ENCODE measurements at regions of chr10 and their contacts with region 1.

Region 1: GRCh38 chr10:95423164-95424005 is 132.6 kb upstream of the PDLIM1 start:
- DNase-seq: no peak
- H3K4me3 ChIP-seq: no peak overlapping the region
- H3K27ac ChIP-seq: no peak overlapping the region
- H3K4me1 ChIP-seq: peaks cover 0 to 3% of the 10 kb centered on the region in 2 donors
- H3K27me3 ChIP-seq: no peaks in the 10 kb centered on the region
- CTCF ChIP-seq: no peak
- POLR2A ChIP-seq: no peak

Region 2: GRCh38 chr10:95341716-95342130 is 81.7 kb before region 1 on chr10:
- intact Hi-C with region 1: no loop called
- DNase-seq: no peak
- H3K4me3 ChIP-seq: no peak overlapping the region
- H3K27ac ChIP-seq: no peak overlapping the region
- H3K4me1 ChIP-seq: peaks cover 7 to 15% of the 10 kb centered on the region in 2 donors
- H3K27me3 ChIP-seq: no peaks in the 10 kb centered on the region
- CTCF ChIP-seq: no peak
- POLR2A ChIP-seq: no peak

Region 3: DNA sequence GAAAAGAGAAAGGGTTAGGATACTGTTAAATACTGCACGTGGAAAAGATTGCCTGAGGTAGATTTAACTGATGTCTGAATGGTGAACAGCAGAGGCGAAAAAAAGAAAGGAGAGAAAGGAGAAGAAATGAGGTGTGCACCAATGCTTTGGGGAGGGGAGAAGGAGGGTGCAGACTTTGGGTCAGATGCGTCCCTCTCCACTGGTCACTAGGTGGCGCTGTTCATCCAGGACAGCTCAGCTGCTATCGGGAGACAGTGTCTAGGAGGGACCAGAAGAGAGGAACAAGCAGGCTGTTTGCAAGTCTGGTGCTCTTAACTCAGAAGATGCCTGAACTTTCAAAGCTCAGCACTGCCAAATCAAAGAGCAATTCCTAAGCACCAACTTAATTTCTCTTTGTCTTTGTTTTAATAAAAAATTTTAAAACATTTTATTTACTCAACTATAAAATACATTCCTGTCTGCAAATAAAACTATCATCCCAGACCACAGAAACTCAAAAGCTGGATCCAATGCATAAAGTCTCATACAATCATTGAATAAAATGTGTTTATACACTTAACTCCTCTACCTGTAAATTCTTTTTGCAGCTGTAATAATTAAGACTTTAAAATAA is 48.7 kb before region 1 on chr10:
- intact Hi-C with region 1: loop called (anchors 10 kb)
- DNase-seq: peak; percentile 65 to 82
- H3K4me3 ChIP-seq: no peak overlapping the region
- H3K27ac ChIP-seq: no peak overlapping the region
- H3K4me1 ChIP-seq: peaks cover 0 to 8% of the 10 kb centered on the region in 2 donors
- H3K27me3 ChIP-seq: no peaks in the 10 kb centered on the region
- CTCF ChIP-seq: peak; percentile 72 to 95 (median 85)
- POLR2A ChIP-seq: no peak